ENCODE measurements at regions of chr1 and their contacts with region 1.

Region 1: GRCh38 chr1:89843281-89844121 is 22.7 kb downstream of the LRRC8D start:
- DNase-seq: peak; percentile 68 to 82 (median 78)
- ATAC-seq: peak; percentile 93
- H3K4me3 ChIP-seq: peak overlapping the region; percentile 69
- H3K4me3 Mint-ChIP-seq: peak overlapping the region; percentile 88 to 97 (median 96)
- H3K27ac ChIP-seq: peak overlapping the region; percentile 87
- H3K27ac Mint-ChIP-seq: peak overlapping the region; percentile 83 to 98 (median 94)
- H3K4me1 ChIP-seq: peaks cover 20 to 30% of the 10 kb centered on the region in 2 donors
- H3K4me1 Mint-ChIP-seq: peaks cover 41 to 58% (median 53%) of the 10 kb centered on the region in 7 donors
- H3K27me3 ChIP-seq: no peaks in the 10 kb centered on the region
- H3K27me3 Mint-ChIP-seq: no peaks in the 10 kb centered on the region

Region 2: GRCh38 chr1:89524369-89525168 is 318.9 kb before region 1 on chr1 and contains the start of gene LRRC8B:
- CTCF ChIA-PET with region 1: no interaction called
- POLR2A ChIA-PET with region 1: interaction called, 3 read pairs
- intact Hi-C with region 1: loop called in 1 of 2 experiments (anchors 1 kb)
- DNase-seq: peak; percentile 80 to 91 (median 86)
- ATAC-seq: peak; percentile 94
- H3K4me3 ChIP-seq: peak within 1 kb of the TSS; percentile 93
- H3K4me3 Mint-ChIP-seq: peak within 1 kb of the TSS in 1 of 10 donors; percentile 76
- H3K27ac ChIP-seq: peak within 1 kb of the TSS; percentile 92
- H3K27ac Mint-ChIP-seq: peak within 1 kb of the TSS in 8 of 9 donors; percentile 89 to 97 (median 94)
- H3K4me1 ChIP-seq: peaks cover 7 to 34% of the 10 kb centered on the region in 2 donors
- H3K4me1 Mint-ChIP-seq: peaks cover 11 to 31% (median 21%) of the 10 kb centered on the region in 7 donors
- H3K27me3 ChIP-seq: no peaks in the 10 kb centered on the region
- H3K27me3 Mint-ChIP-seq: no peaks in the 10 kb centered on the region
- total RNA-seq, gene LRRC8B: 8.8 to 23.0 (median 17.1) TPM

Region 3: DNA sequence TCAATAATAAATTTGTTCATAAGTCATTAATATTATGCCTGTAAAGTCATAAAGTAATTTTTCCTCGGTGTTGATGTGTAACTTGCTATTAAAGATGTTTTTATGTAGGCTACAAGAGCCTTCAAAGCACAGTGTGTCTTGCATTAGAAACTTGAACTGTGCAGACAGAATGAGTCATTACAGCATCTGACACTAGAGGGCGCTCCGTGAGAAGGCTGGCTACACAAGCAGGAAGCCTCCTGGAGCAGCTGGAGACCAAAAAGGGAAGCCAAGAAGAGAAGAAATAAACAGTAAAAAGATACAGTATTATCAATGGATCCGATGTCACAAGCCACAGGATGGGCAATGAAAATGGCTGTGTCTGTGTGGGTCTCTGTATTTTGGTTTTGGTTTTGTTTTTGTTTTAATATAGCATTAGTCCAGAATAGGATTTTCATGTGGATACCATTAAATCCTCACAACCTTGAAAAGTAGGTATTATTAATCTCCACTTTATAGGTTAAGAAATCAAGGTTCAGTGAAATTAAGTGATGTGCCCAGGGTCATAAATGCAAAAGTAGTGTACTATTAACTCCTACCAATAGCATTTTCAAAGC is 38.8 kb before region 1 on chr1:
- CTCF ChIA-PET with region 1: interaction called, 3 read pairs
- POLR2A ChIA-PET with region 1: no interaction called
- intact Hi-C with region 1: loop called (anchors 1 kb)
- DNase-seq: peak; percentile 64 to 83 (median 80)
- ATAC-seq: peak; percentile 98
- H3K4me3 ChIP-seq: no peak overlapping the region
- H3K4me3 Mint-ChIP-seq: no peak overlapping the region
- H3K27ac ChIP-seq: no peak overlapping the region
- H3K27ac Mint-ChIP-seq: no peak overlapping the region
- H3K4me1 ChIP-seq: no peaks in the 10 kb centered on the region
- H3K4me1 Mint-ChIP-seq: peaks cover 0 to 6% (median 0%) of the 10 kb centered on the region in 7 donors
- H3K27me3 ChIP-seq: no peaks in the 10 kb centered on the region
- H3K27me3 Mint-ChIP-seq: peaks cover 0 to 7% (median 0%) of the 10 kb centered on the region in 5 donors

Region 4: DNA sequence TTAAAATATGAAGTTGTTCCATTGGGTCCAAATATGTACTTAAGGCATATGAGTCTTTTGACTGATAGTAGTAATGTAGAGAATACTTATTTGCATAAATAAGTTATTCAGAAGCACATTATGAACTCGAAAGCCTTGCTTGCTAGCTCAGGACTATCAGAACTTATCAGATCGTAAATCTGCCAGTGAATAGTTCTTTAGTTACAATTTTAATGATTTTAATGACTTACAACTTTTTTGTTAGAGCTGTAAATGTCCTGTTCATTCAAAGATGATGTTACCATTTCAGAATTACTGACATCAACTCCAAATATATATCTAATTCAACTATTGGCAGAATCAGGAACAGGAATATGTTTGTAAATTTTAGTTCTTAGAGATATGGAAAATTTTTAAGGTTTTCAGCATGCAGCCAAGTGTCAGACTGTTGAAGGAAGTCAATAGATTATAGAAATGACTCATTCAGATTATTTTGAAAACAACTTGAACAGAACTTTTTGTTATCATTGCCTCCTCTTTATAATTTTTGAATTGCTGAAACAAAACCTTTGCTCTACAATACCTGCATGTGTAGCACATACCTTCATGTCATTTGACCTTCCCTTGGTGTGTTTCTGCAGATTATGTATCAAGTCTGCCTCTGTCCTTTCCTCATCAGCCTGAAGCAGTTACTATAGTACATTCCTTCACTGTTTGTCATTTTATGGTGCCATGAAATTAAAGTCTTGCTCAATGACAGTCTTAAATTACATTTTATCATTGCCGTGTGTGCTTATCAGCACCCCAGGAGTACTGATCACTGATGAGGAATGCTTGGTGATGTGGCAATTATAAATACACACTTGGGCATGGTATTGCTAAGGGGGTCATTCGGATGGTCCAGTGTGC is 22.2 kb after region 1 on chr1:
- CTCF ChIA-PET with region 1: no interaction called
- POLR2A ChIA-PET with region 1: interaction called, 25 read pairs
- intact Hi-C with region 1: loop called (anchors 2 kb)
- DNase-seq: no peak
- ATAC-seq: no peak
- H3K4me3 ChIP-seq: no peak overlapping the region
- H3K4me3 Mint-ChIP-seq: no peak overlapping the region
- H3K27ac ChIP-seq: no peak overlapping the region
- H3K27ac Mint-ChIP-seq: peak overlapping the region in 5 of 9 donors; percentile 0 to 49 (median 42)
- H3K4me1 ChIP-seq: peaks cover 8 to 23% of the 10 kb centered on the region in 2 donors
- H3K4me1 Mint-ChIP-seq: peaks cover 37 to 87% (median 69%) of the 10 kb centered on the region in 7 donors
- H3K27me3 ChIP-seq: no peaks in the 10 kb centered on the region
- H3K27me3 Mint-ChIP-seq: no peaks in the 10 kb centered on the region

Region 5: DNA sequence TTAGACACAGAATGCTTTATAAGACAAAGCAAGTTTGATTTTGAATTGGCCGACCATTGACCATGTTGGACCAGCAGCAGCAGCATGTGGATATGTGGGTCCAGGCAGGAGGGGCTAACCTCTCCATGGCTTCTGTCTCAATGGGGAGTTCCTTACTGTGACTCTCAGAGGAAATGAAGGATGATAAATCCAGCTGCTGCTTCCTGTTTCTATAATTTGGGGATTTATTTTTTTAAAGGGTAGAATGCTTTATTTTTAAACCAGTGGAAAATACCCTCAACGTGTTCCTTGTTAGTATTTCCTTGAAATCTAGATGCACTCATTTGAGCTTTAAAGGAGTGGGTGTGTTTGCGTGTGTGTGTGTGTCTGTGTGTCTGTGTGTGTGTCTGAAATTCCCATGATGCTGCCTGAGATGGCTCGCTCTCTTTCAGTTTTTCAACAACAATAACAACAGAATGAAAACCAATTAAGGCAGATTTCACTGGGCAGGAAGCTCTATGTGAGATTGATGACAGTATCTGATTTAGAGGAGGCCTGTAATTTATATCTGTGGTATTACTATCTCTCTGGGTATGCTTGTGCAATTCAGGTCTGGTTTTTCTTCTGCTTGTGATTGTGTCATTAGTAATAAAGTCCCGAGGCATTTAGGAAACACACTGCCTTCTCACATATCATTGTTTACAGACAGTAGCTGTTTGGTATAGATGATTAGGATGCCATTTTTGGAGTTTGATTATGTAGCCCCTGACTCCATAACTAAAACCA is 65.4 kb after region 1 on chr1:
- CTCF ChIA-PET with region 1: no interaction called
- POLR2A ChIA-PET with region 1: no interaction called
- intact Hi-C with region 1: loop called (anchors 5 kb)
- DNase-seq: no peak
- ATAC-seq: peak; percentile 67
- H3K4me3 ChIP-seq: no peak overlapping the region
- H3K4me3 Mint-ChIP-seq: peak overlapping the region in 1 of 10 donors; percentile 18
- H3K27ac ChIP-seq: no peak overlapping the region
- H3K27ac Mint-ChIP-seq: peak overlapping the region in 8 of 9 donors; percentile 13 to 70 (median 30)
- H3K4me1 ChIP-seq: no peaks in the 10 kb centered on the region
- H3K4me1 Mint-ChIP-seq: peaks cover 32 to 72% (median 53%) of the 10 kb centered on the region in 7 donors
- H3K27me3 ChIP-seq: no peaks in the 10 kb centered on the region
- H3K27me3 Mint-ChIP-seq: no peaks in the 10 kb centered on the region

Region 6: GRCh38 chr1:89994805-89995597 is 151.5 kb after region 1 on chr1 and contains the start of gene ZNF326:
- CTCF ChIA-PET with region 1: no interaction called
- POLR2A ChIA-PET with region 1: no interaction called
- intact Hi-C with region 1: loop called (anchors 1 to 2 kb)
- DNase-seq: peak; percentile 88 to 99 (median 93)
- ATAC-seq: peak; percentile 98
- H3K4me3 ChIP-seq: peak within 1 kb of the TSS; percentile 86
- H3K4me3 Mint-ChIP-seq: peak within 1 kb of the TSS; percentile 91 to 100 (median 99)
- H3K27ac ChIP-seq: peak within 1 kb of the TSS; percentile 85
- H3K27ac Mint-ChIP-seq: peak within 1 kb of the TSS; percentile 90 to 98 (median 96)
- H3K4me1 ChIP-seq: peaks cover 8 to 14% of the 10 kb centered on the region in 2 donors
- H3K4me1 Mint-ChIP-seq: peaks cover 28 to 47% (median 43%) of the 10 kb centered on the region in 7 donors
- H3K27me3 ChIP-seq: no peaks in the 10 kb centered on the region
- H3K27me3 Mint-ChIP-seq: peaks cover 0 to 7% (median 4%) of the 10 kb centered on the region in 5 donors
- total RNA-seq, gene ZNF326: 17.3 to 52.5 (median 23.5) TPM